ENCODE measurements at regions of chr20 and their contacts with region 1.

Region 1: DNA sequence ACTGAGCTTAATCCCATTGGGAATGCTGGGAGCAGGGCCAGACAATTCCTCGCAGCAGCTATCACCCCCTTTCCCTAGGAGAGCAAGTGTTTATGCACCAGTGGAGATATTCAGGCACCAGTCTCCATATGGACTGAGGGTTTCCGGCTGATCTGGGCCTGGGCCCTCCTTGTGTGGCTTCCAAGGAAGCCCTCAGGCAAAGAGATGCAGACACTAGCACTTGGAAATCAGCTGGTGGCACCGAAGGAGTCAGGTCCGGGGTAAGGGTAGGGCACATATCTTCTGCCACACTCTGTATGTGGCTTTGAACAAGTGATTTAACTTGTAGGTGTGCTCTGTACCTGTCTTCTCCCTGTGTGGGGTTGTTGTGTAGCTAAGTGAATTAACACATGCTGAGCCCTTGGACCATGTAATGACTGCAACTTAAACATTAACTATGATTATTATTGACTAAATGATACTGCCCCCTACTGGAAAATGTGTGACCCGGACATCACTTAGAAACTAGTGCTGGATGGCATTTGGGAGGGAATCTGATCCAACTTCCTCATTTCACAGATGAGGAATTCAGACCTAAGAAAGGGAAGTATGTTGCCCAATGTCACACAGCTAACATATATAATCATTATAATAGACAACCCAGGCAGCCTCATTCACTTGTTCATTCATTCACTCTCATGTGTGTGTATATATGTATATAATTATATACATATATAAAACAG is 19.3 kb upstream of the WFDC2 start:
- DNase-seq: no peak
- H3K4me3 Mint-ChIP-seq: no peak overlapping the region
- H3K27ac Mint-ChIP-seq: no peak overlapping the region
- H3K4me1 Mint-ChIP-seq: peaks cover 10% of the 10 kb centered on the region
- H3K27me3 Mint-ChIP-seq: peaks cover 4% of the 10 kb centered on the region

Region 2: GRCh38 chr20:45181639-45182038 is 268.6 kb before region 1 on chr20:
- CTCF ChIA-PET with region 1: no interaction called
- POLR2A ChIA-PET with region 1: no interaction called
- DNase-seq: no peak
- H3K4me3 Mint-ChIP-seq: no peak overlapping the region
- H3K27ac Mint-ChIP-seq: no peak overlapping the region
- H3K4me1 Mint-ChIP-seq: peaks cover 8% of the 10 kb centered on the region
- H3K27me3 Mint-ChIP-seq: peaks cover 10% of the 10 kb centered on the region

Region 3: GRCh38 chr20:45322952-45323383 is 127.3 kb before region 1 on chr20:
- CTCF ChIA-PET with region 1: interaction called, 114 read pairs
- POLR2A ChIA-PET with region 1: interaction called, 3 read pairs
- DNase-seq: no peak
- H3K4me3 Mint-ChIP-seq: no peak overlapping the region
- H3K27ac Mint-ChIP-seq: no peak overlapping the region
- H3K4me1 Mint-ChIP-seq: peaks cover 30% of the 10 kb centered on the region
- H3K27me3 Mint-ChIP-seq: no peaks in the 10 kb centered on the region

Region 4: DNA sequence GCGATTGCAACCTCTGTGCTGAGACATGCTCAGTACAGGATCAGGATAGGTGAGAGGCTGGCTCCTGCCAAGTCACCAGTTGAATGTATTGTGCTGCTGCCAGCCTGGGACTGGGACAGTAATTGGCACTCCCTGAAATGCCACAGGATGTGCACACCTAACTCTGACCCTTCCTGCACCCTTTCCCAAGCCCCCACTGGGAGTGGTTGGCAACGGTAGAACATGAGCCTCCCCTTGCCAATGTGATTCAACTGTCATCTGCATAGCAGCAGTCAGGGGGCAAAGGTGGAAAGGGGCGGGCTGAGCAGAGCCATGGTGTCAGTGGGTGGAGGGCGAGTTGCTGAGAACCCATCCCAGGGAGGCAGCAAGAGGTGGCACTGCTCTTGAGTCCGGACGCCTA is 49.8 kb after region 1 on chr20:
- CTCF ChIA-PET with region 1: no interaction called
- POLR2A ChIA-PET with region 1: no interaction called
- DNase-seq: no peak
- H3K4me3 Mint-ChIP-seq: no peak overlapping the region
- H3K27ac Mint-ChIP-seq: no peak overlapping the region
- H3K4me1 Mint-ChIP-seq: no peaks in the 10 kb centered on the region
- H3K27me3 Mint-ChIP-seq: peaks cover 47% of the 10 kb centered on the region